ENCODE measurements at regions of chr11 and their contacts with region 1.

Region 1: DNA sequence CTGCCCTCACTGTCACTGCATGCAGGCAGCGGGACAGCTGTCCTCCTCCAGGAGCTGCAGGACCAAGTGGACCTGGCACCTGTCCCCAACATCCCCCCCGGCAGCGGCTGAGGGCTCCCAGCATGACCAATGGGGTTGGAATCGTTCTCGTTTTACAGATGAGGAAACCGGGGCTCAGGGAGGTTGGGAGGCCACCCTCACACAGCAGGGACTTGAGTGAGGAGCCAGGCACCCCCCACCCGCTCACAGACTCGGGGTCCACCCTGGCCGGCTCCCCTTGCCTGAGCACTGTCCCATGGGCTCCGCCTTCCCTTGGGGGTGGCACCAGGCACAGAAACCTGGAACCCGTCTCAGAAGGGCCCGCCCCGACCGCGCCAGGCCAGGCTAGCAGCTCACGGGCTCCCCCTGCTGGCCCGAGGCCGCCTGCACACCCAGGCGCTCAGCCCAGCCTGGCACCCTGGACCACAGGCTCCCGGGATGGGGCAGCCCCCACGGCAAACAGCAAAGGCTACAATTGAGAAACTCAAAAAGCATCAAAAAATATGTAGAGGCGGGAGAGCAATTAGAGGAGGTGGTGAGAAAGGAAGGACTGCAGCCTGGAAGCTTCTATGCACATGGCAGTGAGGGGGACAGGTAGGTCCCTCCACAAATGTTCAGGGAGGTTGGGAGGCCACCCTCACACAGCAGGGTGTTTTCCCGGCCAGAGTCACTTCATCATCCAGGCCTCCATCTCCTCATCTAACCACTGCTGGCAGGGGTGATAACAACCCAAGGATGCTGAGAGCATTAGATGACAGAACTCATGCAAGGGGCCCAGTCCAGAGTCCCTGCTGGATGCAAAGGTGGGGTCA is 12.8 kb downstream of the MACROD1 start:
- DNase-seq: peak; percentile 80
- ATAC-seq: peak; percentile 55

Region 2: DNA sequence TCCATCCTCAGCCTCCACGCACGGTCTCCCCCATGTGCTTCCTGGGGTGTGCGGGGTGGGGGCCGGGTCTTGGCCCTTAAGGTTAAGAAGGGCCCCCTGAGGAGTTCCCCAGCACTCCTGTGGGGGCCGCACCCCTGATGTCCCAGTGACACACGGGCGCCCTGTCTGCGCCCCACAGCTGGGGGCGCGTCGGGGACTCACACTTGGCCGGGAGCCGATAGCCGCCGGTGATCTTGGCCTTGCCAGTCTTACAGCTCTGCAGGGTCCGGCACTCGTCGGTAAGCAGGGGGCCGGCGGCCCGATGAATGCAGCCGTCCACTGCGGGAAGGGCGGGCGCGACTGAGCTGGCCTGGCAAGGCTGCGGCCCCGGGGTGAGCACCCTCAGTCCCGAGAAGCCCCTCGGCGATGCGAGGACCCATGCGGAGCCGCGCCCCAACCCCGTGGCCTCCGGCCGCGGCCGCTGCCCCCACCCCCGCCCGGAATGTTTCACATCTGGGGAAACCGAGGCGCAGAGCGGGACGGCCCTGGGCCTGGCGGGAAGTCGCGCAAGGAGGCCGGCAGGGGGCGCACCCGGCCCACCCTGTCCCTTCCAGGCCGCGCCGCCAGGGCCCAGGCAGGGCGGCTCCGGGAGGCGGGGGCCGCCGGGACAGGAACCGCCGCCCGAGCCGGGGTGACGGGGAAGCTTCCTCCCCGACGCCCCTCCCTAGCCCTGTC is 152.9 kb before region 1 on chr11:
- intact Hi-C with region 1: loop called (anchors 2 kb)
- DNase-seq: peak; percentile 82
- ATAC-seq: peak; percentile 94

Region 3: DNA sequence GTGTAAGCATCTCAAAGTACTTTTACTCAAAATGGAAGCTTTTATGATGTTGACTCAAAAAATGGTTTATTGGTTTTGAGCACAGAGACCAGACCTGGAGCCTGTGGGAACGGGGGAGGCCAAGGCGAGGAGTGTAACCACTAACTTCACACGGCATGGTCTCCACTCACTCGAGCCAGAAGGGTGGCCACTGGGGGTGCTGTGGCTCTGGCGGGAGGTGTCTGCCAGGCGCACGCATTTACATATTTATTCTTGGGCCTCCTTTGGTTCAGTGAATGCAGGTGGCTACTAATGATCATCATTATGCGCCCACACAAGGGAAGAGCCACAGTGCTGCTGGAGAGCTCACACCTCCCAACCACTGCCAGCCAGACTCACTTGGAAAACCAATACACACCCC is 52.7 kb before region 1 on chr11:
- intact Hi-C with region 1: no loop called
- DNase-seq: no peak
- ATAC-seq: no peak